Sigmoid colon (tissue), 7 donors: ENCODE measurements at regions of chr4 and their contacts with region 1.

Region 1: DNA sequence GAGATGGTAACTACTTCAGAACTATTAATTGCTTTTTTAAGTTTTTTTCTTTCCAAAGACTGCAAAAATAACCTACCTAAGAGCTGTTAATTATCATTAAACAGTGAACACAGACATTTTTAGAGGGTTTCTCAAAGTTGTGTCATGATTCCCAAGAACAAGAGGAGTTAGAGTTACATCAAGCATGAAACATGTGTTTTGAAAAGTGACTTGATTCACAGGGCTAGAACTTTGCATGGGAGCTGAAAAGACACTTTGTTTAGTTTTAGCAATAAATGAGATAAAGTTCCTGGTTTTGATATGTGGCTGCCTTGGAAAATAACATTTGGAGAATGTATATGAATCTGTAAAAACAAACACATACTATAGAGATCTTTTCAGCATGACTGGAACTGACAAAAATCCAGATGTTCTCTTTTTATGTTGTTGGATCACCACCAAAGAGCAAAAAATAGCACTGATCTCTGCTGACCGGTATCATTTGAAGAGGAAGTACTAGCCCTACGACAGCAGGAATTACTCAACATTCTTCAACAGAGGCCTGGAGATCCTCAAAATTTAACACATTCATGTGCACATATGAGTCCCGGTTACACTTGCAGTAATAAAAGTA is 173.0 kb upstream of the PCDH18 start:
- DNase-seq: no peak
- H3K4me3 ChIP-seq: no peak overlapping the region
- H3K27ac ChIP-seq: peak overlapping the region; percentile 54 to 74 (median 70)
- H3K4me1 ChIP-seq: peaks cover 0 to 68% (median 44%) of the 10 kb centered on the region in 4 donors
- H3K27me3 ChIP-seq: no peaks in the 10 kb centered on the region
- CTCF ChIP-seq: no peak
- EP300 ChIP-seq: peak in 1 of 4 donors; percentile 23
- POLR2A ChIP-seq: no peak

Region 2: GRCh38 chr4:137587796-137588195 is 117.5 kb before region 1 on chr4:
- intact Hi-C with region 1: no loop called
- DNase-seq: no peak
- H3K4me3 ChIP-seq: no peak overlapping the region
- H3K27ac ChIP-seq: no peak overlapping the region
- H3K4me1 ChIP-seq: no peaks in the 10 kb centered on the region
- H3K27me3 ChIP-seq: no peaks in the 10 kb centered on the region
- CTCF ChIP-seq: no peak
- EP300 ChIP-seq: no peak
- POLR2A ChIP-seq: no peak

Region 3: DNA sequence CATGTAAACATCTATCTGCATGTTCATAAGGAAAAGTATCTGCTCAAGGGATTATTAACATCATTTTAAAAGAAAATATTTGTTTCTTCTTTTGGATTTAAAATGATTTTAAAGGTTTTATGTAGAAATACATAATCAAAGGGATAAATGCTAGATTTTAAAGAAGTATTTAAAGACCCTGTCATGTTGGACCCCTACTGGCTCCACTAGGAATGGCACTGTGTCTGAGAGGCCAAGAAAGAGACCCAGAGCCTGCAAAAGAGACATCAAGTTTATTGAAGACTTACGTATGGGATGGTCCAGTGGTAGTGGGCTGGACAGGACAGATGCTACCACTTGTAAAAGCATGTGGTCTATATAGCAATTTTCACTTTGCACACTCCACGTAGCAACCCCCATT is 94.3 kb before region 1 on chr4:
- intact Hi-C with region 1: loop called (anchors 10 kb)
- DNase-seq: no peak
- H3K4me3 ChIP-seq: no peak overlapping the region
- H3K27ac ChIP-seq: no peak overlapping the region
- H3K4me1 ChIP-seq: peaks cover 0 to 10% (median 6%) of the 10 kb centered on the region in 4 donors
- H3K27me3 ChIP-seq: no peaks in the 10 kb centered on the region
- CTCF ChIP-seq: peak in 1 of 4 experiments; percentile 19
- EP300 ChIP-seq: no peak
- POLR2A ChIP-seq: no peak

Region 4: GRCh38 chr4:137664046-137664387 is 41.3 kb before region 1 on chr4:
- intact Hi-C with region 1: loop called (anchors 5 kb)
- DNase-seq: no peak
- H3K4me3 ChIP-seq: peak overlapping the region in 2 of 4 donors; percentile 2 to 5
- H3K27ac ChIP-seq: peak overlapping the region; percentile 75 to 83 (median 81)
- H3K4me1 ChIP-seq: peaks cover 0 to 59% (median 35%) of the 10 kb centered on the region in 4 donors
- H3K27me3 ChIP-seq: no peaks in the 10 kb centered on the region
- CTCF ChIP-seq: no peak
- EP300 ChIP-seq: no peak
- POLR2A ChIP-seq: no peak